K562 (cell line): ENCODE measurements at regions of chr2 and their contacts with region 1.

Region 1: GRCh38 chr2:112584134-112584890 is at the start of gene CHCHD5:
- DNase-seq: peak; percentile 86 to 97 (median 90)
- ATAC-seq: peak; percentile 92
- H3K4me3 ChIP-seq: peak within 1 kb of the TSS; percentile 65
- H3K27ac ChIP-seq: peak within 1 kb of the TSS; percentile 96
- H3K4me1 ChIP-seq: peaks cover 16 to 19% of the 10 kb centered on the region in 2 experiments; a peak in 4 of 5 replicates
- H3K27me3 ChIP-seq: no peaks in the 10 kb centered on the region
- CTCF ChIP-seq: peak; percentile 5 to 38 (median 18); a peak in 3 of 6 replicates
- EP300 ChIP-seq: peak; percentile 65
- POLR2A ChIP-seq: peak; percentile 95
- RAD21 ChIP-seq: no peak
- polyA plus RNA-seq, gene CHCHD5: 56.0 to 79.3 TPM

Region 2: GRCh38 chr2:111897924-111898702 is 686.2 kb before region 1 on chr2 and contains the start of gene MERTK:
- CTCF ChIA-PET with region 1: no interaction called
- POLR2A ChIA-PET with region 1: no interaction called
- in situ Hi-C with region 1: loop called (anchors 10 kb)
- intact Hi-C with region 1: no loop called
- DNase-seq: peak; percentile 77 to 85 (median 84)
- ATAC-seq: peak; percentile 92
- H3K4me3 ChIP-seq: peak within 1 kb of the TSS; percentile 59
- H3K27ac ChIP-seq: 0 out of 3 replicates have a peak within 1 kb of the TSS, but pooled peaks have one; percentile 22
- H3K4me1 ChIP-seq: peaks cover 20 to 24% of the 10 kb centered on the region in 2 experiments
- H3K27me3 ChIP-seq: peaks cover 0 to 6% of the 10 kb centered on the region in 2 experiments; a peak in 2 of 5 replicates
- CTCF ChIP-seq: peak; percentile 71 to 93 (median 79)
- EP300 ChIP-seq: no peak
- POLR2A ChIP-seq: peak; percentile 65; the same call in 1 of the 2 replicates
- RAD21 ChIP-seq: peak; percentile 84 to 89
- polyA plus RNA-seq, gene MERTK: 0.23 to 0.31 TPM

Region 3: GRCh38 chr2:112121682-112122254 is 462.5 kb before region 1 on chr2:
- CTCF ChIA-PET with region 1: interaction called, 24 read pairs
- POLR2A ChIA-PET with region 1: no interaction called
- in situ Hi-C with region 1: loop called (anchors 10 kb)
- intact Hi-C with region 1: loop called (anchors 1 kb)
- DNase-seq: peak in 1 of 4 experiments; percentile 55
- ATAC-seq: no peak; the same call in 2 of the 3 replicates
- H3K4me3 ChIP-seq: no peak overlapping the region
- H3K27ac ChIP-seq: no peak overlapping the region
- H3K4me1 ChIP-seq: no peaks in the 10 kb centered on the region
- H3K27me3 ChIP-seq: no peaks in the 10 kb centered on the region
- CTCF ChIP-seq: peak; percentile 43 to 78 (median 44); a peak in 4 of 6 replicates
- EP300 ChIP-seq: no peak
- POLR2A ChIP-seq: no peak
- RAD21 ChIP-seq: peak; percentile 73 to 80

Region 4: DNA sequence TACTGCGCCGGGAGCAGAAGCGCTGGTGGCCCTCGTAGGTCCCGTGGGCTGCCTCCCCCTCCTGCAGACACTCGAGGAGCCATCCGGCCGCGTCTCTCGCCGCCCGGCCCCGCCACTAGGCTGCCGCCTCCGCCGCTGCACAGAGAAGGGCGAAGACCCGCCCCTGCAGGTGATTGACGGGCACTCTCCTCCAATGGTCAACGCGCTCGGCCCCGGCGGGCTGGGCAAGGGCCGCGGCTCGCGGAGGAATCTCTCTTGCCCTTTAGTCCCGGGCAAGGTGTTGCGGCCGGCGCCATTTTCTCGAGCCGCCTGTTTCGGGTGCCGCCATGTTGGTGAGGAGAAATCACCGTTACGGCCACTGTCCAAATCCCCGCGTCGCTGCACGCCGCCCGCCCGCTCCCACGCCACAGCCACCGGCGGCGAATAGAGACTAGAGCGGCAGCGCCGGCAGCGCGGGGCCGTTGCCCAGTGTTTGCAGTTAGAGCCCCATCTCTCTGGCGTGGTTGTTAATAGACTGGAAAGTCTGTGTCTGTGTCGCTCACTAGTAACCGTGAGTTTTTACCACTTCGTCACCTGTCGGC is 308.9 kb before region 1 on chr2 and contains the start of gene ZC3H6:
- CTCF ChIA-PET with region 1: no interaction called
- POLR2A ChIA-PET with region 1: no interaction called
- in situ Hi-C with region 1: no loop called
- intact Hi-C with region 1: loop called (anchors 5 kb)
- DNase-seq: peak; percentile 96 to 98 (median 97)
- ATAC-seq: peak; percentile 86
- H3K4me3 ChIP-seq: peak within 1 kb of the TSS; percentile 65
- H3K27ac ChIP-seq: peak within 1 kb of the TSS; percentile 97
- H3K4me1 ChIP-seq: peaks cover 9 to 16% of the 10 kb centered on the region in 2 experiments
- H3K27me3 ChIP-seq: no peaks in the 10 kb centered on the region
- CTCF ChIP-seq: 0 out of 6 replicates have a peak, but pooled peaks of 1 of the 3 experiments have one; percentile 15
- EP300 ChIP-seq: no peak
- POLR2A ChIP-seq: peak; percentile 91
- RAD21 ChIP-seq: peak in 1 of 2 experiments; percentile 21; a peak in 1 of 4 replicates
- polyA plus RNA-seq, gene ZC3H6: 0.45 to 0.53 TPM

Region 5: GRCh38 chr2:112542123-112542983 is 42.0 kb before region 1 on chr2 and contains the start of gene POLR1B:
- CTCF ChIA-PET with region 1: interaction called, 3 read pairs
- POLR2A ChIA-PET with region 1: interaction called, 5 read pairs
- in situ Hi-C with region 1: no loop called
- intact Hi-C with region 1: loop called (anchors 5 kb)
- DNase-seq: peak; percentile 80 to 92 (median 84)
- ATAC-seq: peak; percentile 93
- H3K4me3 ChIP-seq: peak within 1 kb of the TSS; percentile 77
- H3K27ac ChIP-seq: peak within 1 kb of the TSS; percentile 91
- H3K4me1 ChIP-seq: peaks cover 5 to 15% of the 10 kb centered on the region in 2 experiments; a peak in 4 of 5 replicates
- H3K27me3 ChIP-seq: no peaks in the 10 kb centered on the region
- CTCF ChIP-seq: no peak
- EP300 ChIP-seq: no peak
- POLR2A ChIP-seq: peak; percentile 75
- RAD21 ChIP-seq: no peak
- polyA plus RNA-seq, gene POLR1B: 19.8 to 38.6 TPM